Naive thymus-derived CD8-positive, alpha-beta T cell (primary cell): ENCODE measurements at regions of chr1 and their contacts with region 1.

Region 1: DNA sequence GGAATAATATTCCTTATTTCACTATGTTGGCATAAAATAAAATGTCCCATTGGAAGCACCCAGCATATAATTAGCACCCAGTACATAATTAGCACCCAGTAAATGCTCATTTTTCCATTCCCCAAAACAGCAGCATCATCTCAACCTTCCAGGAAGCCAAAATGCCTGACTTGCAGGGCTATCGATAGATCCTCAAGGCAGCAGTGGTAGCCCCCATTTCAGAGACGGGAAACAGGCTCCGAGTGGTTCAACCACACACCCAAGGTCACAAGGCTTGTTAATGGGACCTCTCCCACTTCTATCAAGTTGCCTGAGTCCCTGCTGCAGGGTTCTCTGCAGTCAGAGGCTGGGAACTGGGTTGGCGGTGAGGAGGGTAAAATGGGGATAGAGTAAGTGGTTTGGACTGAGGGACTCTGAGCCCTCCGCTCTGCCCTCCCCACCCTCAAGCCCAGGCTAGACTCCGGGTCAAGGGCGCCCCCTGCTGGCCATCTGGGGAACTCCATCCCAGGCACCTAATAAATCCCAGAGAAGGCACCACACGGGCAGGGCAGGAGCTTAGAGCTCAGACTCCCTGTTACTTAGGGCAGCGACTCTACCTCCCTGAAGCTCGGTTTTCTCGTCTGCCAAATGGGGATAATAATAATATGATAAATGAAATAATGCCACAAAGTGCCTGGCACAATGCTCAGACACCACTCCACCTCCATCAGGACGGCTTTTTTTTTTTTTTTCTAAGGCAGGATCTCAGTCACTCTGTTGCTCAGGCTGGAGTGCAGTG is 21.9 kb upstream of the LAPTM5 start:
- DNase-seq: peak; percentile 83 to 99 (median 91)
- ATAC-seq: peak; percentile 78 to 90
- H3K4me3 Mint-ChIP-seq: peak overlapping the region in 8 of 10 donors; percentile 3 to 36 (median 22)
- H3K27ac Mint-ChIP-seq: peak overlapping the region in 7 of 10 donors; percentile 24 to 80 (median 51)
- H3K4me1 Mint-ChIP-seq: peaks cover 12 to 34% (median 14%) of the 10 kb centered on the region in 4 donors
- H3K27me3 Mint-ChIP-seq: no peaks in the 10 kb centered on the region

Region 2: DNA sequence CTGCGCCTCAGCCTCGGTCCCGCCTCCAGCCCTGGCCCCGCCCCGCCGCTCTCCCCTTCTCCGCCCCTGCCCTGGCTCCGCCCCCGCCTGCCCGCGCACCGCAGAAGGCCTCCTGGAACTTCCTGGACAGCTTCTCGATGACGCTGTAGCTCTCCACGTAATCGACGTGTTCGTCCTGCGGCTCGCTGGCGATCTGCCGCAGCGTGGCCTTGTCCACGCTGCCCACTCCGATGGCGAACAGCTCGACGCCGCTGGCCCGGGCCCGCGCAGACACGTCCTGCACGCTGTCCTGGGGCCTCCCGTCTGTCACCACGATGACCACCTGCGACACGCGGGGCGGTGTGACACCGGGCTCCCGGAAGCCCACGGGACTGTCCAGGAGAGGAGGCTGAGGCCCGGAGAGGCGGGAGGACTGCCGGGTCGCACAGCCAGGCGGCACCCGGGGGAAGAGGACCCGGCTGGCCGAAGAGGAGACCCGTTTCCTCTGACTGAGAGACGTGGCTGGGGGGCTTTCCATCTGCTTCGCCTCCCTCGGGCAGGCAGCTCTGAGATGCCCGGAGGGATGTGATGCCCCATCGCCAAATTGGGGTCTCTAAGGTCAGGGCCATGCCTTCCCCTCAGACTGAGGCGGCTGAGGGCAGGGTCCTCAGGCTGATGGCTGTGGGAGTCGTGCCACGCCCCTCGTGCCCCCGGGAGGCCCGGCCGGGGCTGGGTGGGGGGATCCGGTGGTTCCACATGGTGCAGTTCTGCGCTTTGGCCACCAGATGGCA is 60.7 kb before region 1 on chr1:
- POLR2A ChIA-PET with region 1: interaction called, 84 read pairs
- DNase-seq: peak; percentile 79 to 98 (median 89)
- ATAC-seq: peak; percentile 68 to 69
- H3K4me3 Mint-ChIP-seq: peak overlapping the region; percentile 80 to 95 (median 88)
- H3K27ac Mint-ChIP-seq: peak overlapping the region; percentile 72 to 98 (median 96)
- H3K4me1 Mint-ChIP-seq: peaks cover 12 to 53% (median 49%) of the 10 kb centered on the region in 4 donors
- H3K27me3 Mint-ChIP-seq: no peaks in the 10 kb centered on the region

Region 3: GRCh38 chr1:30743584-30744059 is 35.9 kb before region 1 on chr1:
- POLR2A ChIA-PET with region 1: interaction called, 21 read pairs
- DNase-seq: peak; percentile 51 to 92 (median 78)
- ATAC-seq: peak; percentile 75 to 88
- H3K4me3 Mint-ChIP-seq: peak overlapping the region; percentile 72 to 99 (median 94)
- H3K27ac Mint-ChIP-seq: peak overlapping the region; percentile 90 to 99 (median 99)
- H3K4me1 Mint-ChIP-seq: peaks cover 65 to 100% (median 99%) of the 10 kb centered on the region in 4 donors
- H3K27me3 Mint-ChIP-seq: no peaks in the 10 kb centered on the region

Region 4: GRCh38 chr1:30756545-30757195 is 22.8 kb before region 1 on chr1:
- POLR2A ChIA-PET with region 1: interaction called, 24 read pairs
- DNase-seq: peak; percentile 39 to 82 (median 69)
- ATAC-seq: peak; percentile 51 to 64
- H3K4me3 Mint-ChIP-seq: peak overlapping the region; percentile 92 to 100 (median 98)
- H3K27ac Mint-ChIP-seq: peak overlapping the region; percentile 90 to 99 (median 99)
- H3K4me1 Mint-ChIP-seq: peaks cover 55 to 94% (median 83%) of the 10 kb centered on the region in 4 donors
- H3K27me3 Mint-ChIP-seq: no peaks in the 10 kb centered on the region